ENCODE measurements at regions of chr5 and their contacts with region 1.

Region 1: GRCh38 chr5:139439013-139439903 is at the start of gene DNAJC18:
- DNase-seq: peak; percentile 93

Region 2: GRCh38 chr5:139422307-139422893 is 16.9 kb before region 1 on chr5:
- CTCF ChIA-PET with region 1: interaction called, 3 read pairs
- POLR2A ChIA-PET with region 1: interaction called, 13 read pairs
- DNase-seq: peak; percentile 79

Region 3: GRCh38 chr5:139458580-139459406 is 19.5 kb after region 1 on chr5:
- CTCF ChIA-PET with region 1: no interaction called
- POLR2A ChIA-PET with region 1: interaction called, 20 read pairs
- DNase-seq: no peak

Region 4: GRCh38 chr5:139482050-139482889 is 43.0 kb after region 1 on chr5 and contains the start of gene STING1:
- CTCF ChIA-PET with region 1: interaction called, 4 read pairs
- POLR2A ChIA-PET with region 1: interaction called, 17 read pairs
- DNase-seq: no peak

Measured in HEK293T (cell line).